Right ventricle myocardium superior (tissue), 1 donor: ENCODE measurements at regions of chr17 and their contacts with region 1.

Region 1: DNA sequence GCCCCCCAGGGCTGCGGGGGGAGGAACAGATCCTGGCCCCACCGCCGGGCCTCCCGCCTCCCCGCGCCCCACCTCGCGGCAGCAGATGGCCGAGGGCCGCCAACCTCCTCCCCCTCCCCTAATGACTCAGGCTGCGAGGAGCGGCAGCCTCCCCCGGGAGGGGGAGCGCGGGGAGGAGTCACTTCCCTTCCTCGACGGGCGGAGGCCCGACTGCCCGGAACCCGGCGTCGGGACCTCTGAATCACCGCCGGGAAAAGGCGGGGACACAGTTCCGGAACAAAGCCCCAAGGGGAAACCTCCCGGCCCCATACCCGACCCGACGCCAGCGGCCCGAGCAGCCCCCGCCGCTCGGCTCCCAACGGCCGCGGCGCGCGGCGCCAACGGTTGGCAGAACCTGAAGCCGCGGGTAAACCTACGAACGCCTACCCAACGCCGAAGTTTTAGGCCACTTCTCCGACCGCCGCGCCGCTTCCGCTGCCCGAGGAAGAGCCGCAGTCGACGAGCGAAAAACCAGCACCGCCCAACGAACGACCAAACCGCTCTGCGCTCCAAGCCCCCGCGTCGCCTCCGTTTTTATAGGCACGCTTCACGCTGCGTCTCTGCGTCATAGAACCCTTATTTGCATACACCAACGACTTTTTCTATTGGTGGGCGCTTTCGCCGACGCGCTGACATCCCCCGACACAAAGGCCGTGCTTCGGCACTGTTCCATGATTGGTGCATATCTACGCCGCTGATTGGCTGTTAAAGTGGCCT is 5.2 kb upstream of the UNK start:
- DNase-seq: peak; percentile 97
- ATAC-seq: peak; percentile 78

Region 2: GRCh38 chr17:75827252-75828115 is 48.1 kb after region 1 on chr17:
- intact Hi-C with region 1: loop called (anchors 5 kb)
- DNase-seq: peak; percentile 84
- ATAC-seq: peak; percentile 76

Region 3: GRCh38 chr17:75896415-75897159 is 117.2 kb after region 1 on chr17 and contains the start of gene TRIM65:
- intact Hi-C with region 1: loop called (anchors 10 kb)
- DNase-seq: peak; percentile 92
- ATAC-seq: peak; percentile 88
- total RNA-seq, gene TRIM65: 9.1 TPM